Keratinocyte (primary cell): ENCODE measurements at regions of chr19 and their contacts with region 1.

Region 1: GRCh38 chr19:10554760-10555609 is 10.8 kb downstream of the KRI1 start:
- DNase-seq: peak; percentile 79
- H3K4me3 ChIP-seq: no peak overlapping the region
- H3K27ac ChIP-seq: peak overlapping the region; percentile 65
- H3K4me1 ChIP-seq: peaks cover 34% of the 10 kb centered on the region
- H3K27me3 ChIP-seq: no peaks in the 10 kb centered on the region
- CTCF ChIP-seq: peak in 2 of 3 experiments; percentile 26 to 40

Region 2: GRCh38 chr19:10478903-10479384 is 76.0 kb before region 1 on chr19:
- dilution Hi-C with region 1: no loop called
- DNase-seq: peak; percentile 26
- H3K4me3 ChIP-seq: peak overlapping the region in 2 of 3 experiments; percentile 31 to 42
- H3K27ac ChIP-seq: no peak overlapping the region
- H3K4me1 ChIP-seq: peaks cover 3% of the 10 kb centered on the region
- H3K27me3 ChIP-seq: no peaks in the 10 kb centered on the region
- CTCF ChIP-seq: peak in 2 of 3 experiments; percentile 27 to 45

Region 3: GRCh38 chr19:10510301-10510802 is 44.6 kb before region 1 on chr19:
- dilution Hi-C with region 1: loop called (anchors 5 kb)
- DNase-seq: no peak
- H3K4me3 ChIP-seq: no peak overlapping the region
- H3K27ac ChIP-seq: no peak overlapping the region
- H3K4me1 ChIP-seq: peaks cover 18% of the 10 kb centered on the region
- H3K27me3 ChIP-seq: no peaks in the 10 kb centered on the region
- CTCF ChIP-seq: peak; percentile 54 to 63 (median 62)